Naive thymus-derived CD8-positive, alpha-beta T cell (primary cell): ENCODE measurements at regions of chr12 and their contacts with region 1.

Region 1: DNA sequence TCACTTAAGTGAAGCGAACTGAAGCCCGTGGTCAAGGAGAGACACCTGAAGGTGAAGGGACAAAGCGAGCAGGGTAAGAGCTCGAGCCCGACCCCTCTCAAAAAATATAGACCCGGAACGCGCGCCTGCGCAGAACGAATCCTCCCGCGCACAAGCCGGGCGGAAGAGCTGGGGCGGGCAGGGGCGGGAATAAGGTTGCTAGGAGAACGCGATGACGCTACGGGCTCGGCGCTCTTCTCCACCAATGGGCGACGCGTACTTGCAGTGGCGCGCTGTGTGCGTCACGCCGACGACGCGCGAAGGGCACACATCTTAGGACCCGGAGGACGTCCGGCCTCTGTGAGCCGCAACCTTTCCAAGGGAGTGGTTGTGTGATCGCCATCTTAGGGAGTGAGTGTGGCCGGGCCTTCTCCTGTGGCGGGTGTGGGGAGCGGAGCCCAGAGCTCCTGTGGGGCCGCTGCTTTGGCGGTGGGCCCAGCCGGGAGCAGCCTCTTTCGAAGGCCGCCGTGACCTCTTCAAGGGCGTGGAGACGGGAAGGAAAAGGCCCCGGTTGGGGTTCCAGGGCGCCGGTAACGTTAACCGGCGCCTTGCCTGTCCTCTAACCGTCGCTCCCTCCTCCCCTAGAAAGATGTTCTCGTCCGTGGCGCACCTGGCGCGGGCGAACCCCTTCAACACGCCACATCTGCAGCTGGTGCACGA is at the start of gene SLC25A3:
- DNase-seq: peak; percentile 87 to 97 (median 94)
- ATAC-seq: peak; percentile 94 to 96
- H3K4me3 Mint-ChIP-seq: peak within 1 kb of the TSS; percentile 90 to 99 (median 97)
- H3K27ac Mint-ChIP-seq: peak within 1 kb of the TSS; percentile 95 to 100 (median 99)
- H3K4me1 Mint-ChIP-seq: peaks cover 11 to 39% (median 36%) of the 10 kb centered on the region in 4 donors
- H3K27me3 Mint-ChIP-seq: no peaks in the 10 kb centered on the region
- polyA plus RNA-seq, gene SLC25A3: 260 to 332 (median 283) TPM

Region 2: DNA sequence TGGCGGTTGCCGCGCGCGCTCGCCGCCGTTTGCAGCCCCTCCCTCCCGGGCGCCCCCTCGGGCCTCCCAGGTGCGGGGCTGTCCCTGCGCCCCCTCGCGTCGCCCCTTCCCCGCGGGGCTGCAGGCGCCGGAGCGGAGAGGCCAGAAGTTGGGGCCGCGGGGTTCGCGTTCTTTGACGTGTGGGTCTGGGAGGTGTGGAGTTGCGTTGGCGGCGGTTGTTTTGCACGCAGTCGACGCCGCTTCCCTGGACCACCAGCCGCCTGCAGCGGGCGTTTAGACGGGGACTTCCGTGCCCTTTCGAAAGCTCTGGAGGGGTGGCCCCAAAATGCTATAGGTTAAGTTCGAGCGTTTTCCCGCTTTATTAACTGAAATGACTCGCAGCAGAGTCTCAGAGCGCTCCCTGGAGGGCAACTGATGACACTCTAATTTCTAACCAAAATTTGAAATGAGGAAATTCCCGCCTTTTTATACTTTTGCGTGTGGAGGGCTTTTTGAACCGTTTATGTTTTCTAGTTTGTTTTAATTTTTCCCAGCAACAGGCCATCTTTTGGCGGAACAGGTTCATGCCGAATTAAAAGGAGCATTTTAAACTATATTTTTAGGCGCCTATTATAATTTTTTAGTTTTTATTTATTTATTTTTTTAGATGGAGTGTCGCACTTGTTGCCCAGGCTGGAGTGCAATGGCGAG is 77.2 kb before region 1 on chr12:
- POLR2A ChIA-PET with region 1: interaction called, 22 read pairs
- DNase-seq: peak; percentile 66 to 93 (median 84)
- ATAC-seq: peak; percentile 64 to 68
- H3K4me3 Mint-ChIP-seq: peak overlapping the region; percentile 94 to 100 (median 99)
- H3K27ac Mint-ChIP-seq: peak overlapping the region; percentile 96 to 99 (median 99)
- H3K4me1 Mint-ChIP-seq: peaks cover 17 to 66% (median 53%) of the 10 kb centered on the region in 4 donors
- H3K27me3 Mint-ChIP-seq: no peaks in the 10 kb centered on the region

Region 3: DNA sequence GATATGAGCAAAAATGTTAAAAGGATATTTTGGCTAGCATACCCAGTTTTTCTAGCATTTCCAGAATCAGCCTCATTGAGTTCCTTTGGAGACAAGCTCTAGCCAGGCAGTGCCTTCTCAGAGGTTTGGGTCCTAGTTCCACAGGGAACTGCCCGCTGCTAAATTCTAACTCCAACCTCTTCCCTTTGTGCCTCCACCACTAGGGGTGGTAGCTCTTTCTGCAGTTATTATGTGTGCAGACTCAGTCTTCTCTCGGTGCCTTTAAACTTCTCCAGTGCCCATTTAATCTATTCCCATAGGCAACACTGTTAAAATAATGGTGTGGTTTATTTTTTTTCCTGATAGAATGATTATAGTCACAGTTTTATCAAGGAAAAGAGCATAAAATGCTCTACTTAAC is 21.5 kb before region 1 on chr12:
- POLR2A ChIA-PET with region 1: interaction called, 15 read pairs
- DNase-seq: no peak
- ATAC-seq: no peak
- H3K4me3 Mint-ChIP-seq: no peak overlapping the region
- H3K27ac Mint-ChIP-seq: no peak overlapping the region
- H3K4me1 Mint-ChIP-seq: peaks cover 0 to 2% (median 0%) of the 10 kb centered on the region in 4 donors
- H3K27me3 Mint-ChIP-seq: peaks cover 0 to 2% (median 0%) of the 10 kb centered on the region in 5 donors

Region 4: GRCh38 chr12:98606357-98606988 is 13.0 kb after region 1 on chr12:
- POLR2A ChIA-PET with region 1: interaction called, 47 read pairs
- DNase-seq: no peak
- ATAC-seq: no peak
- H3K4me3 Mint-ChIP-seq: peak overlapping the region in 4 of 10 donors; percentile 82 to 86 (median 84)
- H3K27ac Mint-ChIP-seq: peak overlapping the region in 7 of 10 donors; percentile 47 to 96 (median 71)
- H3K4me1 Mint-ChIP-seq: peaks cover 6 to 11% (median 8%) of the 10 kb centered on the region in 4 donors
- H3K27me3 Mint-ChIP-seq: no peaks in the 10 kb centered on the region

Region 5: DNA sequence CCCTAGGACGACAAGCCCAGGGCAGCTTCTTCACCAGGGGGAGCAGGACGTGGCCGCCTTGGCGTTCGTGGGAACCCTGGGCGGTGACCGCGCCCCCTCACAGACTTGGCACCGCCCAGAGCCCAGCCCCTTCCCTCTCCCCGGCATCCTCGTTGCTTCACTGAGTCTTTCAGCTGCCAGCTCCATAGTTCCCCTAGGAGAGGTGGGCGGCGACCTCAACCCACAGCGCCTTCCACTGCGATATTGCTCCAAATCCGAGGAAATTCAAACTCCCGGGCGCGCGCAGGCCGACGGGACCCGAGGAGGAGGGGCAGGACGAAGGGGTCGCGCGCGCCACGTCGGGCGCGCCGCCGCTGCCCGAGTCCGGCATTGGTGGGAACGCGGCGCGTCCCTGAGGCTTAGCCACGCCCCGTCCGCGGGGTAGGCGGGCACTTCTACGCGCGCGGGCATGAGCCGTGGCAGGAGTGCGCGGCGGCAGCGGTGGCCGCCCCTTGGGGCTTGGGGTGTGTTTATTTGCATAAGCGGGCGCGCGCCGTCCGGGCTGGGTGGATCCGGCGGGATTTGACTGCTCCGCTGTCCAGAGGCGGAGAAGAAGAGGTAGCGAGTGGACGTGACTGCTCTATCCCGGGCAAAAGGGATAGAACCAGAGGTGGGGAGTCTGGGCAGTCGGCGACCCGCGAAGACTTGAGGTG is 51.4 kb after region 1 on chr12 and contains the starts of genes APAF1 and IKBIP:
- POLR2A ChIA-PET with region 1: interaction called, 41 read pairs
- DNase-seq: peak; percentile 92 to 98 (median 96)
- ATAC-seq: peak; percentile 85 to 92
- H3K4me3 Mint-ChIP-seq: peak within 1 kb of the TSS; percentile 97 to 100 (median 98)
- H3K27ac Mint-ChIP-seq: peak within 1 kb of the TSS; percentile 84 to 97 (median 95)
- H3K4me1 Mint-ChIP-seq: peaks cover 6 to 51% (median 34%) of the 10 kb centered on the region in 4 donors
- H3K27me3 Mint-ChIP-seq: no peaks in the 10 kb centered on the region
- polyA plus RNA-seq, gene APAF1: 5.2 to 9.5 (median 5.3) TPM
- polyA plus RNA-seq, gene IKBIP: 4.9 to 7.2 (median 5.0) TPM